Activated T-helper 1 cell treated with anti-CD3 and anti-CD28 coated beads, Interleukin-12 subunit alpha, Interleukin-12 subunit beta, Interleukin-2, Interleukin-4 antibody, amounts not matched to agents 30 ng/mL and 10 ng/mL and 1 ng/mL, durations not matched to agents 14 hours and 24 hours and 36 hours (primary cell): ENCODE measurements at regions of chr11 and their contacts with region 1.

Region 1: DNA sequence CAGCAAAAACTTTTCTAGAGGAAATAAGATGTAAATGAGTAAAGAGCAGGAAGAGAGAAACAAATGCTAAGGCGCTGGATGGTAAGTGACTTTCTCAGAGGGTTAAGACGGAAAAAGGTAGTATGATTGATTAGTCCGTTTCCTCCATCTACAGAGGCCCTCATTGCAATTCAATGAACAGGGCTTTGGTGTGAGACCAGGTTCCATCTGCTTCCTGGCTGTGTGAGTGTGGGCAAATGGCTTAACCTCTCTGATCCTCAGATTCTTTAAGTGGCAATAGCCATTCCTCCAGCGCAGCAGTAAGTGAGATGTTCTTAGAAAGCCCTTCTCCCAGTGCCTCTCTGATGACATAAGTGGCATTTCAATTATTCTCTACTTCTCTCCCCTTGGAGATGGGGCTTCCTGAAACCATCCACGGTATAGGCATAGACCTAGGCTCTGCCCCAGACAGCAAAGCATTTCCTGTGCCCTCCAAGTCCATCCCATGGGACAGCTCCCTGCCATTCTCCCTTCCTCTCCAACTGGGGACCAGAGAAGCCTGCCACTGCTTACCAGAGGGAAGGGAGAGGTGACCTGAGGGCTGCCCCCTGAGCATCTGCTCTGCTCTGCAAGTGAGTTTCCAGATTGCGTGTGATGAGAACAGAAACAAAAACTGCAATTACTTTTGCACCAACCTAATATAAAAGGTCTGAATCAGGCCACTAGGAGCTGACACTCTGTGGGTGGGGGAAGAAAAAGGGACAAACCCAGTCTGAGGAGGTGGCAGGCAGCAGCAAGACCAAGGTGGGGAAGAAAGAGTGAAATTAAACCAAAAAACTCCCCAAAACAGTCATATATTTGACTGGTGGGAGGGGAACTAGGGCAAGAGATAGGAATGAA is 12.7 kb upstream of the CD44 start:
- DNase-seq: no peak
- H3K4me3 Mint-ChIP-seq: peak overlapping the region; percentile 64
- H3K27ac Mint-ChIP-seq: peak overlapping the region; percentile 84
- H3K4me1 Mint-ChIP-seq: peaks cover 58% of the 10 kb centered on the region
- H3K27me3 Mint-ChIP-seq: no peaks in the 10 kb centered on the region

Region 2: DNA sequence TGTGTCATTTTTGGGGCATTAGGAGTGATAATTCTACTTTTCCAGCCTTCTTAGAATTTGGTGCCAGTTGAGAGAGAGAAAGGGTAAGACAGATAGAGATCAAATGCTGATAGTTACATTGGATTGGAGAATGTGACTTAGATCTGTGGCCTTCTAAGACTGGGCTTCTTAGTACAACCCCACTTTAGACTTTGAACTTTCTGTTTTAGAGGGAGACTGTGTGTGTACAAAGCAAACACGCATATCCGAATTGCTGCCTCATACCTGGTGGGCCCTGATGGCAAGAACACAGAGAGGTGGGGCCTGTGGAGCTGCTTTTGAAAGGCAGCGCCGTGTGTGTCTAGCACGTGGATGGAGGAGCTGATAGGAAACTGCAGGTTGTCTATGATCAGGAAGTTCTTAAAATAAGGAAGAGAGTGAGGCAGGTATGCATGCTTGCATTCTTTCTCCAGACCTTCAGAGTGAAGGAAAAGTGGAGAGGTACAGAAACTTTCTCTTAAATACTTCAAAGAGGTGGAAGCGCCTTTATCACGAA is 196.4 kb before region 1 on chr11:
- intact Hi-C with region 1: no loop called
- DNase-seq: no peak
- H3K4me3 Mint-ChIP-seq: no peak overlapping the region
- H3K27ac Mint-ChIP-seq: no peak overlapping the region
- H3K4me1 Mint-ChIP-seq: peaks cover 7% of the 10 kb centered on the region
- H3K27me3 Mint-ChIP-seq: no peaks in the 10 kb centered on the region

Region 3: GRCh38 chr11:35050541-35050995 is 75.7 kb before region 1 on chr11:
- intact Hi-C with region 1: loop called (anchors 1 kb)
- DNase-seq: no peak
- H3K4me3 Mint-ChIP-seq: peak overlapping the region; percentile 79
- H3K27ac Mint-ChIP-seq: peak overlapping the region; percentile 93
- H3K4me1 Mint-ChIP-seq: peaks cover 69% of the 10 kb centered on the region
- H3K27me3 Mint-ChIP-seq: peaks cover 2% of the 10 kb centered on the region

Region 4: GRCh38 chr11:35087648-35088047 is 38.6 kb before region 1 on chr11:
- intact Hi-C with region 1: loop called (anchors 1 kb)
- DNase-seq: peak; percentile 9
- H3K4me3 Mint-ChIP-seq: no peak overlapping the region
- H3K27ac Mint-ChIP-seq: peak overlapping the region; percentile 42
- H3K4me1 Mint-ChIP-seq: peaks cover 50% of the 10 kb centered on the region
- H3K27me3 Mint-ChIP-seq: no peaks in the 10 kb centered on the region

Region 5: GRCh38 chr11:35106595-35106994 is 19.6 kb before region 1 on chr11:
- intact Hi-C with region 1: no loop called
- DNase-seq: no peak
- H3K4me3 Mint-ChIP-seq: no peak overlapping the region
- H3K27ac Mint-ChIP-seq: no peak overlapping the region
- H3K4me1 Mint-ChIP-seq: peaks cover 39% of the 10 kb centered on the region
- H3K27me3 Mint-ChIP-seq: peaks cover 5% of the 10 kb centered on the region

Region 6: DNA sequence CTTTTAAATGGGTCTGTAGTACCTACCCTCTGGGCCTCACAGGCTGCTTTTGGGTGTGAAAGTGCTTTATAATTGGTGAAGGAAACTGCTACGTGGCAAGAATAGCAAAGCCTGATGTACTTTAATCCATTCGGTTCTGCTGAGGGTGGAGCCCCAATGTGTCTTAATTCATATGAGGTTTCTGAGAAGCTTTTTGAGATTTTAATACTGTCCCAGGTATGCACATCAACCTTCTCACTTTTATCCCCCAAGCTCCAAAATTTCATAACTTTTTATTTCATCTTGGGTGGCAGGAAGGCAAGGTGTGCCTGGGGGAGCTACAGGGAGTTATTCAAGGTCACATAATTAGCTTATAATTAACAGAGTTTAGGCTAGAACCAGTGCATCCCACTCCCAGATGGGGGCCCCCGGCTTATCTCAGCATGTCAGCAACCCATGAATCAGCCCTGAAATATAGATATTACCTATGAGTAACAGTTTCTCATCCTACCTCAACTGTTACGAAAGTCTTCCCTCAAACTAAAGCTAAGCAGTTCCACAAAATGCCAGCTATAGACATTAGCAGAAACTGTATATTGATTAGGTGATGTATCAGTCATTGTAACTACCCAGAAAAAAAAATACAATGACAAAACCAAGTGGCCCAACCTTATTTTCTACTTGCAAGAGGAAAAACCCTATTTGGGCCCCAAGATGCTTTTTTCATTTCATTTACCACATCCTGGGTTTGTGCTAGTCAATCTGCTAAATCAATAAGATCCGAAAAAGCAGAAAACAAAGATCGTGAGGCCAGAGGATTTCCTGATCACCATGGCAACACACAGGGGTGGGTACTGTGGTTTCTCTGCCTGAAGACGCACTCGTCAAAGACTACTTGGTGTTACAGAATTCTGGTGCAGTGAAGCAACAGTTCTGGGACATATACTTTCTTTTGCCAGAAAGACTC is 39.5 kb after region 1 on chr11:
- intact Hi-C with region 1: loop called (anchors 1 kb)
- DNase-seq: peak; percentile 92
- H3K4me3 Mint-ChIP-seq: peak overlapping the region; percentile 63
- H3K27ac Mint-ChIP-seq: peak overlapping the region; percentile 97
- H3K4me1 Mint-ChIP-seq: peaks cover 100% of the 10 kb centered on the region
- H3K27me3 Mint-ChIP-seq: no peaks in the 10 kb centered on the region

Region 7: GRCh38 chr11:35237860-35238715 is 111.8 kb after region 1 on chr11:
- intact Hi-C with region 1: loop called (anchors 5 kb)
- DNase-seq: peak; percentile 48
- H3K4me3 Mint-ChIP-seq: peak overlapping the region; percentile 42
- H3K27ac Mint-ChIP-seq: peak overlapping the region; percentile 36
- H3K4me1 Mint-ChIP-seq: peaks cover 67% of the 10 kb centered on the region
- H3K27me3 Mint-ChIP-seq: no peaks in the 10 kb centered on the region